GM12878 (cell line): ENCODE measurements at regions of chr1 and their contacts with region 1.

Region 1: DNA sequence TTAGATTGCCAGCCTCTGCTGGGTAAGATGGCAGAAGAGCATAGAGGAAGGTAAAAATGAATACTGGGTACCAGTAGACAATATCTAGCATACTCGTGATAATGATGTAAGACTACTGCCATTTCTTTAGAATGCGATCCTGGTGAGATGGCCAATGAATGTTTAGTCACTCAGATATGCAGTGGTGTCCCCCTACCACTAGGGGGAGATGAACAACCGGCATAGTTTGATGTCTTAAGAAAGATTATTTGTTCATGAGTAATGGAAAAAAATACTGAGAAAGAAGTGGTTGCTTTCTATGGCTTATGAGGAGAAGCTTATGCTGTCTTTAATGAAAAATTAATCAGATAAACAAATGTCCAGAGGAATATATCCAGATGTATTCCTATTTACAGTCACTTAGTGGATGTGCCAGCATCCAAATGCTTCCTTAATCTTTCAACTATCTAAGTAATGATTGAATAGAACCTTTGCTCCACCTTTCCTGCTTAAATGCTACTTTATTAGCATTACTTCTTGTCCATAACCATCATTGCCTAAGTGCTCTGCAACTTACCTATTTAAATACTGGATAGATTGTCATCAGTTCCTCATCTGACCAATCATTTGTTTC is 256.6 kb downstream of the ST6GALNAC3 start:
- DNase-seq: no peak
- ATAC-seq: peak; percentile 90
- H3K4me3 ChIP-seq: no peak overlapping the region
- H3K27ac ChIP-seq: no peak overlapping the region
- H3K4me1 ChIP-seq: no peaks in the 10 kb centered on the region
- H3K27me3 ChIP-seq: no peaks in the 10 kb centered on the region
- CTCF ChIP-seq: peak; percentile 83 to 89 (median 89)
- EP300 ChIP-seq: no peak
- POLR2A ChIP-seq: no peak
- RAD21 ChIP-seq: peak; percentile 85

Region 2: DNA sequence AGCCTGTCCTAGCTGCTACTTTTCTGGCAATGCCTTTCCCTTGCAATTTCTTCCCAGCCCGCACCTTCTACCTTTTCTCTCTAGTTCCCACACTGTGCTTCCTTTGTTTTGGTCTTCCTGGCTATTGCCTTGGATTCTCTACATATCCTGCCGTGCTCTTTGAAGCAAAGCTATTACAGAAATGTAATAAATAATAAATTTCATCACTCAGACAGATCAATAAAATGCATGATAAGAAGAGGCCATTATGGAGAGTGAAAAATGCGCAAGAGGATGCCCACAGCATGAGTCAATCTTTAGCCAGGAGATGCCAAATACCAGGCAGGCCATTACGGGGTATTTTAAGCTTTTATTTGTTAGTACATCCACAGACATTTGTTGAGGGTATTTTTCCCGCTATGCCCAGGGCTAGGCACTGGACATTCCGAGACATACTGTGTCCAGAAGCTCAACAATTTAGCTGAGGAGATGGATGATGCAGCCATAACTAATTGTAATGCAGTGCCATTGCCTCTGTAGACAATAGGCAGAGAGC is 92.9 kb before region 1 on chr1:
- CTCF ChIA-PET with region 1: no interaction called
- POLR2A ChIA-PET with region 1: no interaction called
- RAD21 ChIA-PET with region 1: no interaction called
- SMC1A ChIA-PET with region 1: no interaction called
- in situ Hi-C with region 1: no loop called
- intact Hi-C with region 1: no loop called
- DNase-seq: no peak
- ATAC-seq: no peak
- H3K4me3 ChIP-seq: no peak overlapping the region
- H3K27ac ChIP-seq: no peak overlapping the region
- H3K4me1 ChIP-seq: no peaks in the 10 kb centered on the region
- H3K27me3 ChIP-seq: no peaks in the 10 kb centered on the region
- CTCF ChIP-seq: no peak
- EP300 ChIP-seq: no peak
- POLR2A ChIP-seq: no peak
- RAD21 ChIP-seq: no peak

Region 3: DNA sequence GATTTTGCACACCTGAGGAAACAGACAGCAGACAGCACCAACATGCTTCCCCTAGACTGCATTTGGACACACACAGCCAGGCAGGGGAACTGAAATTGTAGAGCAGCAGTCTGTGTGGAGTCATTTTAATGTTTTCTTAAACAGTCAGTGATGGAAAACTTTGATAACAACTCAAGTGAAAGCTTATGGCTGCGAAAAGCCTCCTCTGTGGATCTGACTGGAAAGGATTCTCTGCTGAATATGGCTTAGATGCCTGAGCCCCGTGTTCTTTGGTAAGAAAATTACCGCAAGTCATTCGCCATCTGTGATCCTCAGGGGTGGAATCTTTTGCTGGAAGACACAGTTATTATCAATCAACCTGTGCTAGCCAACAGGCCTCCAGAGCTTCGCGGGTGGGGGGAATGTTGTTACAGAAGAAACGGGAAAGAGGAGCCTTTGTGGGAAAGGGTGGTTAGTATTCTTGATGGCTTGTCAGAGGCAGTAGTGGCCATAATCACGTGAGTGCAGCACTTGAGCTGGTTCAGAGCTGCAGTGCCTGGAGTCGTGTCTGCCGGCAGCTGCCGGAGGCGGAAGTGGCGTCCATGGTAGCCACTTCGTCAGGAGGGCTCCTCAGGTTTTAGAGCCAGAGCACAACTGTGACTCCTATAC is 51.9 kb before region 1 on chr1:
- CTCF ChIA-PET with region 1: no interaction called
- POLR2A ChIA-PET with region 1: no interaction called
- RAD21 ChIA-PET with region 1: no interaction called
- SMC1A ChIA-PET with region 1: no interaction called
- in situ Hi-C with region 1: no loop called
- intact Hi-C with region 1: no loop called
- DNase-seq: no peak
- ATAC-seq: no peak
- H3K4me3 ChIP-seq: no peak overlapping the region
- H3K27ac ChIP-seq: no peak overlapping the region
- H3K4me1 ChIP-seq: no peaks in the 10 kb centered on the region
- H3K27me3 ChIP-seq: no peaks in the 10 kb centered on the region
- CTCF ChIP-seq: no peak
- EP300 ChIP-seq: no peak
- POLR2A ChIP-seq: no peak
- RAD21 ChIP-seq: no peak

Region 4: GRCh38 chr1:76366726-76367125 is 35.6 kb after region 1 on chr1:
- CTCF ChIA-PET with region 1: no interaction called
- POLR2A ChIA-PET with region 1: no interaction called
- RAD21 ChIA-PET with region 1: no interaction called
- SMC1A ChIA-PET with region 1: no interaction called
- in situ Hi-C with region 1: no loop called
- intact Hi-C with region 1: no loop called
- DNase-seq: no peak
- ATAC-seq: no peak
- H3K4me3 ChIP-seq: no peak overlapping the region
- H3K27ac ChIP-seq: no peak overlapping the region
- H3K4me1 ChIP-seq: no peaks in the 10 kb centered on the region
- H3K27me3 ChIP-seq: no peaks in the 10 kb centered on the region
- CTCF ChIP-seq: no peak
- EP300 ChIP-seq: no peak
- POLR2A ChIP-seq: no peak
- RAD21 ChIP-seq: no peak

Region 5: DNA sequence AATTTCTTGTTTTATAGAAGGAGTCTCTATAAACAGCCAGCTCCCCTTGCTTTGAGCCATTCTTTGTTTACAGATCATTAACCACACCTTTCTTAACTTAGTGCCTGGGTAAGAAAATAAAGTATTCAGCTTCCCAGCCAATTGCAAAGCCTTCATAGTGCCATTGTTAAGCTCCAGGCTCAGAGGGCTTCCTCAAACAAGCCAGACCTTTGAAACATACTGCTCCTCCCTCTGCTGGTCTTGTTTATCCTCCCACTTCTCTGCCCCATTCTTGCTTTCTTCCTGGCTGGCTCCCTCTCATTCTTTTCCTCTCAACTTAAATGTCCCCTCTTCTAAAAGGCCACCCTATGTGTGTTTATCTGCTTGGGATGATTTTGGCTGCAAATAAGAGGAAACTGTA is 216.8 kb after region 1 on chr1:
- CTCF ChIA-PET with region 1: no interaction called
- POLR2A ChIA-PET with region 1: no interaction called
- RAD21 ChIA-PET with region 1: no interaction called
- SMC1A ChIA-PET with region 1: no interaction called
- in situ Hi-C with region 1: no loop called
- intact Hi-C with region 1: loop called (anchors 10 kb)
- DNase-seq: no peak
- ATAC-seq: no peak
- H3K4me3 ChIP-seq: no peak overlapping the region
- H3K27ac ChIP-seq: no peak overlapping the region
- H3K4me1 ChIP-seq: no peaks in the 10 kb centered on the region
- H3K27me3 ChIP-seq: no peaks in the 10 kb centered on the region
- CTCF ChIP-seq: no peak; a peak in 1 of 6 replicates
- EP300 ChIP-seq: no peak
- POLR2A ChIP-seq: no peak
- RAD21 ChIP-seq: no peak

Region 6: GRCh38 chr1:77126307-77126706 is 795.2 kb after region 1 on chr1:
- CTCF ChIA-PET with region 1: interaction called, 11 read pairs
- POLR2A ChIA-PET with region 1: no interaction called
- RAD21 ChIA-PET with region 1: interaction called, 7 read pairs
- SMC1A ChIA-PET with region 1: interaction called, 20 read pairs
- in situ Hi-C with region 1: no loop called
- intact Hi-C with region 1: loop called (anchors 2 kb)
- DNase-seq: no peak
- ATAC-seq: peak; percentile 91
- H3K4me3 ChIP-seq: no peak overlapping the region
- H3K27ac ChIP-seq: no peak overlapping the region
- H3K4me1 ChIP-seq: no peaks in the 10 kb centered on the region
- H3K27me3 ChIP-seq: no peaks in the 10 kb centered on the region
- CTCF ChIP-seq: peak; percentile 46 to 76 (median 49); a peak in 5 of 6 replicates
- EP300 ChIP-seq: no peak
- POLR2A ChIP-seq: no peak
- RAD21 ChIP-seq: peak; percentile 81